SK-N-SH (cell line): ENCODE measurements at regions of chr11 and their contacts with region 1.

Region 1: DNA sequence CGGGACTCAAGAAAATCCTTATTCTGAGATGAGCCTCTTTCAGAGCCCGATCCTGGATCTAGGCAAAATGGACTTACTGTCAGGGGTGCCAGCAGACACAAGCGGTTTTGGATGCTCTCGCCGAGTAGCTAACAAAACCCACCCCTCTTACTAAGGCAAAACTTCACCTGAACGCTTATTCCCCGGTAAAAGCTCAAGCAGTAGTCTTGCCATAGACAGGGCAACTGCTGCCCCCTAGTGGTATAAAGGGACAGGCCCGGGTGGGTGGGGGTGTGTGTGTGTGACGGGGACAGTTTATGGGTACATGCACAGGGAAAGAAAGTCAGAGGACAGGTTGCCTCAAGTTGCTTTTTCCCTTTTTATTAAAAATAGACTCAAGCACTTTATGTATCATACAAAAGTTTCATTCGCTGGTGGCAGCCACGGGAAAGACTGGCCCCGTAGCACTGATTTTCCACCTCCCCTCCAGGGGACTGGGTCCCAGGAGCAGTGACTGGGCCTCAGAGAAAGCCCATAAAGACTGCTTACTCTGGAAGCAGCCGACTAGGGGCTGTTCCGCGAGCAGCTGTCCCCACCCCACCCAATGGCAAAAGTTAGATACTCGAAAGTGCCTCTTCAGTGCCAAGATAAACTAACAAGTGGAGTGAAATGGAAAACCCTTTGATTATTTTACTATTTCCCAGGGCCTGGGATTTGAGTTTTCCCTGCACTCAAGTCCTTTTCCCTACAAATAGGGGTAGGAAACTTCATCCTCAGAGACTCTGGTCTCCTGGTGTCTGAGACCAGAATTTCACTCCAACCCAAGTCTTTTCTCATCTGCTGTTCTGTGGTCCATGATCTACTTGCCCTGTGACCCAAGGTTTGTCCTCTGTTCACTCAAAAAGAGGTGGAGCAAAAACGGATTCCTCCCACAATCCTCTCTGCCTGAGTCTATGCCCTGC is 4.7 kb downstream of the YPEL4 start:
- DNase-seq: peak; percentile 87
- H3K4me3 ChIP-seq: peak overlapping the region in 1 of 2 experiments; percentile 36; a peak in 1 of 4 replicates
- H3K27ac ChIP-seq: no peak overlapping the region
- H3K4me1 ChIP-seq: peaks cover 27 to 30% of the 10 kb centered on the region in 2 experiments; a peak in 3 of 4 replicates
- H3K27me3 ChIP-seq: no peaks in the 10 kb centered on the region
- CTCF ChIP-seq: peak; percentile 87
- EP300 ChIP-seq: no peak
- RAD21 ChIP-seq: peak; percentile 78

Region 2: DNA sequence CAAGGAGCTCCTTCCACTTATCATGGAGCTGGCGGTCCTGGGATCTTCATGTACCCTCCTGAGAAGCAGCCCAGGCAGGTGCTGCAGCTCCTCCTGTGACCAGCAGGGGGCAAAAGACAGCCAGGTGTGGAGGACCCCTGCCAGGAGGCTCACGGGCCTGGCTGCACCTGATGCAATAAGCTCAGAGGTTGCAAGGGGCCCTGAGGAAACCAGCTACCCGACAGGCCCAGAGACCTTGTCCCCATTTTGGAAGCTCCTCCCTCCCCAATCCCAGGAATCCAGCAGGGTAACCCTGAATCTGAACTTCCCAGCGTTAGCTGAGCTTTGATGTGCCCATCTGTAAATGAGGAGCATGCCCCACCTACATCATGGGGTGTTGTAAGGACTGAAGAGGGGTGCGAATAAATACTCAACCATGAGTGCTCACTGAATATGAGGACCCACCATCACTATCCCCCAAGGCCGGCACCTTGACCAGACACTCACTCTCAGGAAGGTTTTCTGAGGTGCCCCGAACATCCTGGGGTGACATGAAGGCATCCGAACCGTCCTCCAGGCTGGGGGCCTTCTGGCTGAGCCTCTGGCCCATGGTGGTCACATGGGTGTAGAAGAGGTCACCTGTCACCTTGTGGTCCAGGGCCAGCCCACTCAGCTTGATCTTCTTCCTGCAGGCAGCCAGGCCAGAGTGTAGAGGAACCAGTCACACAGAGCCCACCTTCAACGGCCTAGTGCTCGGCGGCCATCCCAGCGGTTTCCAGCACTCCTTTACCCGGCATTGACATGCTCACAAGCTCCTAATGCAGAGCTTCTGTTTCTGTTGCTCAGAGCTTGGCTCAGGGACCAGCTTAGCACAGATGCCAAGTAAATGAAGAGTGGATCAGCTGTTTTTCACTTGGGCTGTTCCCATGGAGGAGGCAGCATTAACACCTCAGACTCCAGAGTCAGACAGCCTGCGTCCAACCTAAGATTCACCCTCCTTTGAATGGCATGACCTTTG is 151.2 kb before region 1 on chr11:
- CTCF ChIA-PET with region 1: interaction called, 24 read pairs
- POLR2A ChIA-PET with region 1: interaction called, 4 read pairs
- DNase-seq: peak; percentile 78
- H3K4me3 ChIP-seq: no peak overlapping the region; a peak in 1 of 4 replicates
- H3K27ac ChIP-seq: no peak overlapping the region
- H3K4me1 ChIP-seq: peaks cover 0 to 3% of the 10 kb centered on the region in 2 experiments; a peak in 1 of 4 replicates
- H3K27me3 ChIP-seq: no peaks in the 10 kb centered on the region
- CTCF ChIP-seq: peak; percentile 90
- EP300 ChIP-seq: no peak
- RAD21 ChIP-seq: peak; percentile 71

Region 3: DNA sequence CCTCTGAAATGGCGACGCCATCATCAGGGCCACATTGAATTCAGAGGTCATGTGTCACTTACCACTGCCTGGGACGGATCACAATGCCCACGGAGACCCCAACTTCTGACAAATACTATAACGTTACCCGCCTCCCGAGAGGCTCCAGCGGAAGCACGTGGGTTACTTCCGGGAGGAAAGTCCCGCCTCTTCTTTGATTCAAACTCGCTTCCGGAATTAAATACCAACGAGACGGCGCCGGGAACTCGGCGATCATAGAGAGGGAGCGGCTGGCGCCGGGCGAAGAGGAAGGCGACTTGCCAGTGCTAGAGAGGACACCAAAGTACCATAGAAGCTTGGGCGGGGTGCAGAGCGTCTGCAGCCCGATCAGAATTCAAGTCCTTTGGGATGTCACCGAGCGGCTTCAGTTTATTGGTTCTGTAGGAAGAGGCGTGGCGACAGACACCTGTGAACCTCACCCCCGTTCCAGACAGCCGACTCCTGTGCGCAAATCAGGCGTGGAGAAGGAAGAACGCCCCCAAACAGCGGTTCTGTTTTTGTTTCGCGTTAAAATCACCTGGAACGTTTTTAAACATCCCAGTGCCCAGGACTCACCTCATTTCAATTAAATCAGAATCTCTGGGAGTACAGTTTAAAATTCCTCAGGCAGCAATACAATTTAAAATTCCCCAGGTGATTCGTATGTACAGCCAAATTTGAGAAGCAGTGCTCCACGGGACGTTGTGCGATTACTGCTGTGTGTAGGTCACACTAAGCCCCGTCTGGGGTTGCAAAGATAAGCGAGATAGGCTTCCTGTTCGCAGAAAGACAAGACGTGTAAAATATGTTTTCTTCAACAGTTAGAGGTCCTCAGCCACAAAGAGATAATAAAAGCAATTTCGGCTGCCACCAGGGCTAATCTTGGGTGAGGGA is 114.2 kb before region 1 on chr11 and contains the start of gene TIMM10:
- CTCF ChIA-PET with region 1: interaction called, 14 read pairs
- POLR2A ChIA-PET with region 1: no interaction called
- DNase-seq: peak; percentile 88
- H3K4me3 ChIP-seq: peak within 1 kb of the TSS; percentile 83 to 95
- H3K27ac ChIP-seq: peak within 1 kb of the TSS; percentile 11 to 71; a peak in 3 of 4 replicates
- H3K4me1 ChIP-seq: peaks cover 0 to 9% of the 10 kb centered on the region in 2 experiments; a peak in 2 of 4 replicates
- H3K27me3 ChIP-seq: no peaks in the 10 kb centered on the region
- CTCF ChIP-seq: no peak
- EP300 ChIP-seq: peak in 1 of 2 experiments; percentile 33; a peak in 1 of 4 replicates
- RAD21 ChIP-seq: 0 out of 2 replicates have a peak, but pooled peaks have one; percentile 9
- polyA plus RNA-seq, gene TIMM10: 179 and 189 TPM in 2 replicates

Region 4: GRCh38 chr11:57619331-57619730 is 25.7 kb before region 1 on chr11:
- CTCF ChIA-PET with region 1: interaction called, 12 read pairs
- POLR2A ChIA-PET with region 1: no interaction called
- DNase-seq: no peak
- H3K4me3 ChIP-seq: no peak overlapping the region
- H3K27ac ChIP-seq: no peak overlapping the region
- H3K4me1 ChIP-seq: no peaks in the 10 kb centered on the region
- H3K27me3 ChIP-seq: peaks cover 19% of the 10 kb centered on the region
- CTCF ChIP-seq: peak; percentile 35
- EP300 ChIP-seq: no peak
- RAD21 ChIP-seq: no peak

Region 5: DNA sequence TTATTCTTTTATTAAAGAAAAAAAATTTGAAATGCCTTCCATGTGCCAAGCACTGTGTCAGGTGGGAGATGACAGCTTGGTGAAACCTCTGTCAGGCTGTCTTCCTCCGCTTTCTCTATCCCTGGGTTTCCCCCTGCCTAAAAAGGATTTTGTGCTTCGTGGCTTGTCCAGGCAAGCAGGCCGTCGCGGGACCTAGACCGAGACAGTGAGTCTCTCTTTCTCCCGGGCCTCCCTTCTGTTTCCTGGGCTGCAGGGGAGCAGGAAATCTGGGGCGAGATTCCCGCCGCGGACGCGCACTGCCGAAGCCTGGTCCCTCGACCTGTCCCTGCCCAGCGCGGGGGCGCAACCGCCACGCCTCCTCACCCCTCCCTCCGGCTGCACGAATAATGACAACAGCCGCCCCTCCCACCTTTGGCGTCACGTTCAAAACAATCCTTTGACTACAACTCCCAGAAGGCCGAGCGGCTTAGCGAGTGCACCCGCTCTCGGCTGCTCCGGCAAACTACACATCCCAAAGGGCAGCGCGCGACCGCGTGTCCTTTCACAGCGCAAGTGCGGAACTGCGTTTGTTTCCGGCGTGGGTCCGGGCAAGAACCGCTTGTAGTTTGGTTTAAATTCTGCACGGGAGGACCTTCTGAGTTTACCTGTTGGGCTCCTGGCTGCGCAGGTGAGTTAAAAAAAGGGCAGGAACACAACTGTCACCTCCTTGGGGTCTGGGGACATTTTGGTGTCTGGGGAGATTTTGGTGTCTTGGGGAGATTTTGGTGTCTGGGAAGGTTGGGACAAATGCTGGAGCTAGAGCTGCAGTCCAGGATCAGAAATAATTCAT is 12.4 kb after region 1 on chr11 and contains the start of gene CLP1:
- CTCF ChIA-PET with region 1: interaction called, 14 read pairs
- POLR2A ChIA-PET with region 1: interaction called, 6 read pairs
- DNase-seq: peak; percentile 95
- H3K4me3 ChIP-seq: peak within 1 kb of the TSS; percentile 71 to 85
- H3K27ac ChIP-seq: peak within 1 kb of the TSS; percentile 71 to 80
- H3K4me1 ChIP-seq: peaks cover 0 to 2% of the 10 kb centered on the region in 2 experiments; a peak in 2 of 4 replicates
- H3K27me3 ChIP-seq: no peaks in the 10 kb centered on the region
- CTCF ChIP-seq: no peak
- EP300 ChIP-seq: no peak
- RAD21 ChIP-seq: no peak
- polyA plus RNA-seq, gene CLP1: 18.1 and 25.8 TPM in 2 replicates

Region 6: GRCh38 chr11:58086528-58086927 is 441.5 kb after region 1 on chr11:
- CTCF ChIA-PET with region 1: no interaction called
- POLR2A ChIA-PET with region 1: no interaction called
- DNase-seq: no peak
- H3K4me3 ChIP-seq: no peak overlapping the region
- H3K27ac ChIP-seq: no peak overlapping the region
- H3K4me1 ChIP-seq: no peaks in the 10 kb centered on the region
- H3K27me3 ChIP-seq: no peaks in the 10 kb centered on the region
- CTCF ChIP-seq: no peak
- EP300 ChIP-seq: no peak
- RAD21 ChIP-seq: no peak